ENCODE measurements at regions of chr13 and their contacts with region 1.

Region 1: DNA sequence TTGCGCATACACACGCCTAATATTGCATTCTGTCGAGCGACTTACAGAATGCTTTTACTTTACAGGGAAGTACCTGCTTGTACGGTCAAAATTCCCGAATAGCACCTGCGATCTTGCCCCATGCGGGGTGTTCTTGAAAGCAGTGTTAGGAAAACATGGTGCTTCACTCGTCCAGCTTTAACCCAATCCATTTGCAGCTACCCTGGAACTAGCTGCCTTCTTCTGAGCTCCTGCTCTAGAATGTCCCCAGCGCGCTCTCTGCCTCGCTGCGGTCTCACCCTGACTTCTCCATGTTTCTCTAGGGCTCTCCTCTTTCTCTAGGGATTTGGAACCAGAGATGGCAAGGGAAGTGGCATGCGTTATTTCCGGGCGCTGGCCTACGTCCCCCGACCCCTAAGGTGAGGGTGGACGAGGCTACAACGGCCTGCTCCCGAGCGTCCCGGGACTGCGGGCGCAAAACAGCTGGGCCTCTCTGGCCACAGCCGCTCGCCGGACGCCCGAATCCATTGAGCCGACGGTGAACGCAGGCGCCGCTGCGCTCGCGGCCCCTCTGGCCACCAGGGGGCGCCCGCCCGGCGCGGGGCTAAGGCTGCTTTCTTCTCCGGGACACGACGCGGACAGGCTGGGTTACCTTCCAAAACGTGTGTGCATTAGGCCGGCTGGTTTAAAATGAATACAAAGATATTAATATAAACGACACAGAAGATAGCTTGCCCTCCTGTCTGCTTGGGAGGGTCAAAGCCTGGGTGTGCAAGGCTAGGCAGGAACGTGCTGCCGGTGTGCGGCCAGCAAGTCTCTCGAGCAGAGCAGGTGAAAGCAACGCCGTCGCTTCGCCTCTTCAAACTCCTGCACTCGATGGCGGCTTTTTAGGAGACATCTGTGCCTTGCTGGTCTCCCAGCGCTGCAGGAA is 1.8 kb upstream of the SPRY2 start:
- DNase-seq: peak; percentile 83
- H3K4me3 Mint-ChIP-seq: no peak overlapping the region
- H3K27ac Mint-ChIP-seq: no peak overlapping the region
- H3K4me1 Mint-ChIP-seq: peaks cover 16% of the 10 kb centered on the region
- H3K27me3 Mint-ChIP-seq: no peaks in the 10 kb centered on the region
- CTCF ChIP-seq: peak; percentile 86

Region 2: GRCh38 chr13:78841358-78841963 is 1501.3 kb before region 1 on chr13:
- CTCF ChIA-PET with region 1: no interaction called
- POLR2A ChIA-PET with region 1: no interaction called
- intact Hi-C with region 1: no loop called
- DNase-seq: no peak
- H3K4me3 Mint-ChIP-seq: no peak overlapping the region
- H3K27ac Mint-ChIP-seq: no peak overlapping the region
- H3K4me1 Mint-ChIP-seq: no peaks in the 10 kb centered on the region
- H3K27me3 Mint-ChIP-seq: peaks cover 17% of the 10 kb centered on the region
- CTCF ChIP-seq: no peak

Region 3: DNA sequence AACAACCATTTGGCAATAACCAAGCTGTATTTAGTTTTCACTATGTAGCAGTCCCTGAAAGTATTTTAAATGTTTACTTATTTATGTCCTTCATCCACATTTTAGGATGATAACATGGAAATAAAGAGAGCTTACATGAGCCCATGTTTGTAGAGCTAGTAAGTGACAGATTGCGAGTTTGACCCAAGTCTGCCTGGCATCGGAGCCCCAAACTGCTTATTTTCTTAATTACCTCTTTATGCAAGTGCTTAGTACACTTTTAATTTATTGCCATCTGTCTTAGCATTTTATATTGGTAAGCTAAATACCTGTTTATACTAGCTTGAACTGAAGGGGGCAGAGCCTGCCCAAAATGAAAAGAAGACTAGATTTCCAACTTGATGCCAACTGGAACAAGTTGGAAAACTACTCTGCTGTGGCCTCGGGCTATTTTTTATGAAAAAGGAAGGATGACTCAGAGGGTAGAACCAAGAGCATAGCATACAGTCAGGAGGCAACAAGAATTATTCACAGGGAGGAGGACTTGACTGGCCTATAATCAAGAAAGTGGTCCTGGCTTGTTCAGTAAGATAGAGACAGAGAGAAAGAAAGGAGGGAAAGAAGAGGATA is 711.6 kb before region 1 on chr13:
- CTCF ChIA-PET with region 1: interaction called, 10 read pairs
- POLR2A ChIA-PET with region 1: interaction called, 25 read pairs
- intact Hi-C with region 1: loop called (anchors 1 kb)
- DNase-seq: peak; percentile 98
- H3K4me3 Mint-ChIP-seq: no peak overlapping the region
- H3K27ac Mint-ChIP-seq: peak overlapping the region; percentile 23
- H3K4me1 Mint-ChIP-seq: peaks cover 19% of the 10 kb centered on the region
- H3K27me3 Mint-ChIP-seq: no peaks in the 10 kb centered on the region
- CTCF ChIP-seq: peak; percentile 47

Region 4: GRCh38 chr13:79775830-79776229 is 566.9 kb before region 1 on chr13:
- CTCF ChIA-PET with region 1: interaction called, 7 read pairs
- POLR2A ChIA-PET with region 1: interaction called, 18 read pairs
- intact Hi-C with region 1: loop called (anchors 1 kb)
- DNase-seq: peak; percentile 58
- H3K4me3 Mint-ChIP-seq: no peak overlapping the region
- H3K27ac Mint-ChIP-seq: no peak overlapping the region
- H3K4me1 Mint-ChIP-seq: peaks cover 20% of the 10 kb centered on the region
- H3K27me3 Mint-ChIP-seq: no peaks in the 10 kb centered on the region
- CTCF ChIP-seq: peak; percentile 53

Region 5: DNA sequence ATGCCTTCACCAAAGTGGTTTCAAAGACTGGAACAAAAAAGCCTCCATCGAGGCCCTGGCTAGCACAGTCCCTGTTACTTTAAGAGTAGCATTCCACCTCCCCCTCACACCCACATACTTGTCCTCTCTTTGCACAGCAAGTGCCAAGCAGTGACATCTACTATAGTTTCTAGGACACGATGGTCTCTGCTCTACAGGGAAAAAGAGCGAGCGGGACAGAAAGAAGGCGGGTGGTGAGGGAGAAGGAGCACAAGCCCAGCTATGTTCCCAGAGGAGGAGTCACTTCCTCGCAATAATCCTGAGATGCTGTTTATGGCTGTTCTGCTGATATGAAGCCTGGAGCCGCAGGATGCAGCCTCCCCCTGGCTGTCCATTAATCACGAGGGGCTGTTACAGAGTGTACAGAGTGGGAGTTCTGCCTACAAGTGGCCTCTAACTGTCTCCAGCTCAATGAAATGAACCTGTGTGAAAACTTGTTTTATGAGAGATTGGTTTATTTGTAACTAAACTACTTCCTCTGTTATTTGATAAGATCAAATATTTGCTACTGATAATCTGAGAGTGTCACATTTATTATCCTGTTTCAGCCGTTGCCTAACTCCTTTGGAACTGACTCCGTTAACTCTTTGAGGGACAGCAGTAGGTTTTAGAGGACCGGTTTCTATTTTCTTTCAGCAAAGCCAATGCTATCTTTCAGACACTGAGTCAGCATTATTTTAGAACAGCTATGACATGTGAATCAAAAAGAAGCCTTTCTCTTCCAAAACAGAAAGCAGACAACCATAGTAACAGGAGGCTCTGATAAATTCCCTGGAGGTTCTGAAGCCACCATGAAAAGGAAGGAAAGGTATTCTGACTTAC is 209.8 kb before region 1 on chr13:
- CTCF ChIA-PET with region 1: no interaction called
- POLR2A ChIA-PET with region 1: interaction called, 3 read pairs
- intact Hi-C with region 1: loop called (anchors 5 kb)
- DNase-seq: peak; percentile 51
- H3K4me3 Mint-ChIP-seq: peak overlapping the region; percentile 71
- H3K27ac Mint-ChIP-seq: peak overlapping the region; percentile 88
- H3K4me1 Mint-ChIP-seq: peaks cover 23% of the 10 kb centered on the region
- H3K27me3 Mint-ChIP-seq: no peaks in the 10 kb centered on the region
- CTCF ChIP-seq: no peak

Region 6: GRCh38 chr13:80245162-80245733 is 97.5 kb before region 1 on chr13:
- CTCF ChIA-PET with region 1: no interaction called
- POLR2A ChIA-PET with region 1: no interaction called
- intact Hi-C with region 1: no loop called
- DNase-seq: no peak
- H3K4me3 Mint-ChIP-seq: no peak overlapping the region
- H3K27ac Mint-ChIP-seq: no peak overlapping the region
- H3K4me1 Mint-ChIP-seq: no peaks in the 10 kb centered on the region
- H3K27me3 Mint-ChIP-seq: no peaks in the 10 kb centered on the region
- CTCF ChIP-seq: no peak

Region 7: DNA sequence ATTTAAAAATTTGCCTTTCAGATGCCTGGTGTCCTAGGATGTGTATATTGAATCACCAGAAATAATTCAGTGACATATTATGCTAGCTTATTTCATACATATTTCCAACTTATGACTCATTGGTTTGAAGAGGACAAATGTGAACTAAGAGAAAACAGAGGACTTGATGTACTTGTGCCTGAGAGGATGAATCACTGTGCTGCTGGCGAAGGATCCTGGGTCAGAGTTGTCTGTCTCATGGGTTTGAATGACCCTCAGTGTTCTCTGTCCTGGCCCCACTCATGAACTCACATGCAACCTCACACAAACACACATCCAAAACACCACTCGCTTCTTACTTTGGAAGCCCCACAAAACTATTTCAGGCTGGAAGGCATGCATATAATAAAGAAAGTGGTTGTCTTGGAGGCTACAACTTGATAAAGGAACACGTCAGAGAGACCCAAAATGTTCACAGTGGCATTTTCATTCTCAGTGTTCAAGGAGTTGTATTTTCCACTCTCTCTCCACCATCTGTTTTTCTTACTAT is 127.2 kb after region 1 on chr13:
- CTCF ChIA-PET with region 1: interaction called, 11 read pairs
- POLR2A ChIA-PET with region 1: interaction called, 16 read pairs
- intact Hi-C with region 1: loop called (anchors 5 kb)
- DNase-seq: peak; percentile 92
- H3K4me3 Mint-ChIP-seq: peak overlapping the region; percentile 30
- H3K27ac Mint-ChIP-seq: peak overlapping the region; percentile 98
- H3K4me1 Mint-ChIP-seq: peaks cover 53% of the 10 kb centered on the region
- H3K27me3 Mint-ChIP-seq: no peaks in the 10 kb centered on the region
- CTCF ChIP-seq: no peak

Region 8: GRCh38 chr13:80923907-80924306 is 581.2 kb after region 1 on chr13:
- CTCF ChIA-PET with region 1: interaction called, 19 read pairs
- POLR2A ChIA-PET with region 1: interaction called, 4 read pairs
- intact Hi-C with region 1: loop called (anchors 1 kb)
- DNase-seq: peak; percentile 21
- H3K4me3 Mint-ChIP-seq: no peak overlapping the region
- H3K27ac Mint-ChIP-seq: no peak overlapping the region
- H3K4me1 Mint-ChIP-seq: no peaks in the 10 kb centered on the region
- H3K27me3 Mint-ChIP-seq: no peaks in the 10 kb centered on the region
- CTCF ChIP-seq: no peak

Region 9: GRCh38 chr13:81017513-81018152 is 674.9 kb after region 1 on chr13:
- CTCF ChIA-PET with region 1: interaction called, 55 read pairs
- POLR2A ChIA-PET with region 1: interaction called, 13 read pairs
- intact Hi-C with region 1: loop called (anchors 1 kb)
- DNase-seq: peak; percentile 61
- H3K4me3 Mint-ChIP-seq: no peak overlapping the region
- H3K27ac Mint-ChIP-seq: no peak overlapping the region
- H3K4me1 Mint-ChIP-seq: no peaks in the 10 kb centered on the region
- H3K27me3 Mint-ChIP-seq: no peaks in the 10 kb centered on the region
- CTCF ChIP-seq: peak; percentile 39

Measured in MCF 10A (cell line).